Caco-2 (cell line): ENCODE measurements at regions of chr7 and their contacts with region 1.

Region 1: DNA sequence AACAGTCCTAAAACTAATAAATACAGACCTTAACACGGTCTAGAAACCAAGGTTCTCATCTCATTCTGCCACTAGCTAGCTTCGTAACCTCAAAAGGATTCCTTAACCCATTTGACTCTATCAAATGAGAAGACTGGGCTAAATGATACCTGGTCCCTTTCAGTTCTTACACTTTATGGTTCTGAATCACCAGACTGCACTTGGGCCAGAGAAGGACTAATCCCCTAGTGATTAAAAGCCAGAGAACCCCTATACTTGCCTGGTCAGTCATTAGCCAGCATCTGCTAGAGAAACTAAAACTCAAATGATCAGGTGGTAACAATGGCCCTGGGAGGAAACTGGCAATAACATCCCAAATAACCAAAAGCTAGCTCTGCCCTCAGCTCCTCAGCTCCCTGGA is 16.8 kb downstream of the TMEM243 start:
- DNase-seq: no peak
- H3K4me3 ChIP-seq: no peak overlapping the region
- H3K4me3 Mint-ChIP-seq: no peak overlapping the region
- H3K27ac Mint-ChIP-seq: no peak overlapping the region
- H3K4me1 ChIP-seq: peaks cover 9% of the 10 kb centered on the region
- H3K4me1 Mint-ChIP-seq: no peaks in the 10 kb centered on the region
- H3K27me3 ChIP-seq: no peaks in the 10 kb centered on the region
- H3K27me3 Mint-ChIP-seq: no peaks in the 10 kb centered on the region
- CTCF ChIP-seq: no peak

Region 2: GRCh38 chr7:87219545-87220025 is 16.9 kb after region 1 on chr7 and contains the start of gene TMEM243:
- CTCF ChIA-PET with region 1: interaction called, 3 read pairs
- POLR2A ChIA-PET with region 1: interaction called, 3 read pairs
- intact Hi-C with region 1: loop called (anchors 2 kb)
- DNase-seq: peak; percentile 64 to 66
- H3K4me3 ChIP-seq: peak within 1 kb of the TSS; percentile 66
- H3K4me3 Mint-ChIP-seq: peak within 1 kb of the TSS; percentile 97
- H3K27ac Mint-ChIP-seq: peak within 1 kb of the TSS; percentile 74
- H3K4me1 ChIP-seq: peaks cover 5% of the 10 kb centered on the region
- H3K4me1 Mint-ChIP-seq: peaks cover 8% of the 10 kb centered on the region
- H3K27me3 ChIP-seq: no peaks in the 10 kb centered on the region
- H3K27me3 Mint-ChIP-seq: no peaks in the 10 kb centered on the region
- CTCF ChIP-seq: peak; percentile 22 to 26
- total RNA-seq, gene TMEM243: 24.2 and 28.6 TPM in 2 replicates